ENCODE measurements at regions of chr3 and their contacts with region 1.

Region 1: DNA sequence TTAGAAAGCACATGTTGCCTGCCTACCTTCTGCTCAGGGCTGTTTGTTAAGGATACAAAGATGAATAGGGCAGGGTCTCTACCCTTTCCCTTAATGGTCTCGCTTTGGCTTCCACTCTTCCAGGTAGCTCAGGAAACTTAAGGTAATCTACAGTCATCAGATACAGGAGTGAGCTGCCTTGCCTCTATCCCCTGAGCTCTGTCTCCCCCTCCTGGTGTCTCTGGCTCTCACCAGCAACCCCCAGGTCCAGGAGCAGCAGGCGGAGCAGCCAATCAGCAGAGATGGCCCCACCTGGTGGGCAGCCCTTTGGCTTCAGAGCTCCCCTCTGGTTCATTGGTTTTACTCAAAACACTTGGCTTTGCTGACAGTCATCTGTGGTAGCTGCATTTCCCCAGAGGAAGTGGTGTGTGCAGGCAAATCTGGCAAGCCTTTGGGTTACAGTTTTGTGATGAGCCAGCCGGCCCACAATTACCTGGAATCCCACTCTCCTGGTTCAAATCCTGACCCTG is 8.5 kb upstream of the CX3CR1 start:
- H3K4me3 Mint-ChIP-seq: no peak overlapping the region
- H3K27ac Mint-ChIP-seq: no peak overlapping the region
- H3K4me1 Mint-ChIP-seq: peaks cover 22% of the 10 kb centered on the region
- H3K27me3 Mint-ChIP-seq: no peaks in the 10 kb centered on the region

Region 2: DNA sequence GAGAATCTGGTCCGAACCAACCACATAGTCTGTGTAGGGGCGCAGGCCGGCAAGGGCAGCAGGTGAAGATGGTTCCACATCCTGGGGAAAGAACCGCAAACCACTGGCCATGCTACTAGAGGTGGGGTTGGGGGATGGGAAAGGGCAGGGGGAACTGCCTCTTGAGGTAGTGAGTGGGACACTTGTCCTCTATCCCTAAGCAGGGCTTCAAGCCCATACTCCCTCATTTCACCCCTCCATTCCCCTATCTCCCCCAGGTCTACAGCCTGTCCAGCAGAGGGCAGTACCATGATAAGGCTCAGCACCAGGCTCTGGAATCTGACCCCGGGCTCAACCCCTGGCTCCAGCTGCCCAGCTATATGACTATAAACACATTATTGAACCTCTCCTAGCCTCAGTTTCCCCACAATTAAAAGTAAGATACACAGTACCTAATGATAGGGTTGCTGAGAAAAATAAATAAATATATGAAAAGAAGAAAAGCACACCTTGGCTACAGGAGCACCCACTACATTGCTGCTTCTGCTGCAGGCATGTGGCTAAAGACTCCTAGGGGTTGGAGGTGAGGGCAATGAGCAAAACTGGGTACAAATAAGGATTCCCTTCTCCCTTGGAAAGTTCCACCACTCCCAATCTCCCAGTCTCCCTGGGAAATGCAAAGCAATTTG is 187.2 kb before region 1 on chr3:
- intact Hi-C with region 1: loop called (anchors 2 kb)
- H3K4me3 Mint-ChIP-seq: no peak overlapping the region
- H3K27ac Mint-ChIP-seq: no peak overlapping the region
- H3K4me1 Mint-ChIP-seq: peaks cover 47% of the 10 kb centered on the region
- H3K27me3 Mint-ChIP-seq: no peaks in the 10 kb centered on the region

Region 3: DNA sequence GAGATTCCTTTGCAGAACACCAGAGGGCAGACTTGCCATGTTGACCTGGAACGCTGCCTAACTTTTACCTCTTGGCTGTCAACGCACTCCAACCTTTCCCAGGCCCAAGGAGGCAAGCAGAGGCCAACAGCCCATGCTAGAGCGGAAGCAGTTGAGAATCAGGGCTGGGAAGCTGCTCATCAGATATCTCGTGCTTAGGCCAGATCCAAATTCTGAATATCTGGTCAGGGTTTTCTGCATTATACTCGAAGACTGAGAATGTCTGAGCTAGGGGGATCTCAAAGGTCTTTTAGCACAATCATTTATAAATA is 98.4 kb before region 1 on chr3:
- intact Hi-C with region 1: loop called (anchors 1 kb)
- H3K4me3 Mint-ChIP-seq: no peak overlapping the region
- H3K27ac Mint-ChIP-seq: peak overlapping the region; percentile 10
- H3K4me1 Mint-ChIP-seq: peaks cover 7% of the 10 kb centered on the region
- H3K27me3 Mint-ChIP-seq: peaks cover 12% of the 10 kb centered on the region

Region 4: DNA sequence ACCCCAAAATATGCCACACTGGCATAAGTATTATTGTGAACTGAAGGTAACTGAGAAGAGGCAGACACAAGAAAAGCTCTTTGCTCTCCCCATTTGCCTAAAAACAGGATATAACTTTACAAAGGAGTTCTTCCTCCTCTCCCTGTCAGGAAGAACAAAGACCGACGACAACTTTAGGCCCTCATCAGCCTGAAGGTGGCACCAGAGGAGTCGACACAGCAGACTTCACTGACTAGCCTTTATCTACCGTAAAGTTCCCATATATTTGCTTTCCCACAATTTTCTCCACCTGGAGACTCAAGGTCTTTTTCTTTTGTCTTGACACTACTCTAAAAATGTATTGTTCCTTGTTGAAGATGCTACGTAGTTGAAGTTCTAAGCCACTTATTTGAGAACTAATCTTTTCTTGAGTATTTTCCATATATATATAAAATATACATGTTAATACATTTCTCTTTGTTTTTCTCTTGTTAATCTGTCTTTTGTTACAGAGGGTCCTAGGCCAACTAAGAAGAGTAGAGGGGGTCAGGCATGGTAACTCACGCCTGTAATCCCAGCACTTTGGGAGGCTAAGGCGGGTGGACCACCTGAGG is 79.8 kb before region 1 on chr3:
- intact Hi-C with region 1: loop called (anchors 1 kb)
- H3K4me3 Mint-ChIP-seq: no peak overlapping the region
- H3K27ac Mint-ChIP-seq: no peak overlapping the region
- H3K4me1 Mint-ChIP-seq: peaks cover 26% of the 10 kb centered on the region
- H3K27me3 Mint-ChIP-seq: peaks cover 3% of the 10 kb centered on the region